H1 (cell line): ENCODE measurements at regions of chr6 and their contacts with region 1.

Region 1: DNA sequence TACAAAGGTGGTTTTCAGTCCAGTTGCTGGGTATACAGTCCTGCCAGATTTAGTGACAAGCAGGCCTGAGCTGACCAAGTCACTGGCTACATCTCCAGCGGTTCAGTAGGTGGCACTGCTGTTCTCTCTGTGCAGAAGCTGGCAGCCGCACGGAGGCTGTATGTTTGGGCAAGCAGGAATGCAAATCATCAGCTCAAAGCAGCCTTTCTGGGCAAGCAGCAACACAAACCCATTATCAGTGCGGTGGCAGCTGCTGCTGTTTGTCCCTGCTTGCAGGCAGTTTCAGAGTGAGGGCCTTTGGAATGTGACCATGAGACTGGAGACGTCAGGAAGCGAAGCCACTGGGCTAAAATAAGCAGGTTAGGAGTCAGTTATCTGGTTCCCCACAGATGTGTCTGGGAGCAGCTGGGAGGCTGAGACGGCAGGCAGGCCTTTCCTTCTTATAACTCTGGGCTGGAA is 72.5 kb downstream of the TXLNB start:
- DNase-seq: peak; percentile 65 to 71
- H3K4me3 ChIP-seq: no peak overlapping the region
- H3K27ac ChIP-seq: no peak overlapping the region
- H3K4me1 ChIP-seq: no peaks in the 10 kb centered on the region
- H3K27me3 ChIP-seq: no peaks in the 10 kb centered on the region
- CTCF ChIP-seq: peak; percentile 86 to 93 (median 92)
- EP300 ChIP-seq: no peak
- POLR2A ChIP-seq: no peak
- RAD21 ChIP-seq: peak; percentile 98

Region 2: DNA sequence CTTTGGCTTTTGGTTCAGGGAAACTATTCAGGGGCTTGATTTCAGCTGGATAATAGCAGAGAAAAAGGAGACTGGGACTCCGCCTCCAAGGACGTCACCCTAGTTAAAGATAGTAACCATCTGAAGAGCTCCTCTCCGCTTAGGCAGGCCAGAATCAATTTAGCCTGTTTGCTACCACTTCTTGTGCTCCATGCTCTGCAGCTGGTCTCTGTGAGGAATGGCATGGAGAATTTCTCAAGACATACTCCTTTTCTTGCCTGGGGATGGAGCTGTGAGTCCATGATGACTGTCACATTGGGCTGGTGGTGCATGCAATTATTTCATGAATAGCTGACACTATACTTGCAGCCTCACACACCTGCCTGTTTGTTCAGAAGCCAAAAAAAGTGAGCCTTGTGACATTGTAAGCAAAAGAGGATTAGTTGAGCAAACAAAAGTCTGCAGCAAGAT is 11.1 kb after region 1 on chr6:
- CTCF ChIA-PET with region 1: interaction called, 10 read pairs
- POLR2A ChIA-PET with region 1: no interaction called
- DNase-seq: no peak
- H3K4me3 ChIP-seq: no peak overlapping the region
- H3K27ac ChIP-seq: no peak overlapping the region
- H3K4me1 ChIP-seq: peaks cover 0 to 7% (median 0%) of the 10 kb centered on the region in 4 experiments; a peak in 2 of 7 replicates
- H3K27me3 ChIP-seq: no peaks in the 10 kb centered on the region
- CTCF ChIP-seq: peak; percentile 9 to 41 (median 21); a peak in 3 of 4 replicates
- EP300 ChIP-seq: no peak
- POLR2A ChIP-seq: no peak
- RAD21 ChIP-seq: peak; percentile 63 to 75

Region 3: DNA sequence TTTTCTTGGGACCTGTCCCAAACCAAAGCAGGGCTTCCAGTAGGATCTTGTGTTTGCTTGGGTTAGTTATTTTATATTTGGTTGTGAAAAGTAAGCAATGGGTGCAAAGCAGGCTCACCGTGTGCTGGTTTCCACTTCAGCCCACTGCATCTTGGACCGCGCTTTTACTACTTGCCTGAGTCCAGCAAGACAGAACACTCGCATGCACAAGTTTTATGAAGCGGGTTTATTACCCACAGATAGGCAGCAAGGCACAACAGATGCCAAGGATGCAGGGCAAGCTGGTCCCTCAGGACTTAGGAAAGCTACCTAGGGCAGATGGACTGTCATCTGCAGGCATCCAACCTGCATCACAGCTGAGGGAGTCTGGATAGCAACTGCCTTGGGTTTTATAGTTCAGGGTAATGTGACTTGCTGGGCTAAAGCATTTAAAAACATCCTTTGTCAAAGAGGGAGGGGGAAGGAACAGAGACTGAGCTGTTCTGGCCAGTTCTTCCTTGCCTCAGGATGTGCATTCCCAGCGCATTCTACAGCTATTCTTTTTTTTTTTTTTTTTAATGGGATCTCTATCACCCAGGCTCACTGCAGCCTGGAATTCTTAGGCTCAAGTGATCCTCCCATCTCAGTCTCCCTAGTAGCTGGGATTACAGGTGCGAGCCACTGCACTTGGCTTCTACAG is 136.6 kb after region 1 on chr6:
- CTCF ChIA-PET with region 1: interaction called, 33 read pairs
- POLR2A ChIA-PET with region 1: no interaction called
- DNase-seq: no peak
- H3K4me3 ChIP-seq: no peak overlapping the region
- H3K27ac ChIP-seq: no peak overlapping the region
- H3K4me1 ChIP-seq: no peaks in the 10 kb centered on the region
- H3K27me3 ChIP-seq: no peaks in the 10 kb centered on the region
- CTCF ChIP-seq: no peak
- EP300 ChIP-seq: no peak
- POLR2A ChIP-seq: no peak
- RAD21 ChIP-seq: no peak

Region 4: DNA sequence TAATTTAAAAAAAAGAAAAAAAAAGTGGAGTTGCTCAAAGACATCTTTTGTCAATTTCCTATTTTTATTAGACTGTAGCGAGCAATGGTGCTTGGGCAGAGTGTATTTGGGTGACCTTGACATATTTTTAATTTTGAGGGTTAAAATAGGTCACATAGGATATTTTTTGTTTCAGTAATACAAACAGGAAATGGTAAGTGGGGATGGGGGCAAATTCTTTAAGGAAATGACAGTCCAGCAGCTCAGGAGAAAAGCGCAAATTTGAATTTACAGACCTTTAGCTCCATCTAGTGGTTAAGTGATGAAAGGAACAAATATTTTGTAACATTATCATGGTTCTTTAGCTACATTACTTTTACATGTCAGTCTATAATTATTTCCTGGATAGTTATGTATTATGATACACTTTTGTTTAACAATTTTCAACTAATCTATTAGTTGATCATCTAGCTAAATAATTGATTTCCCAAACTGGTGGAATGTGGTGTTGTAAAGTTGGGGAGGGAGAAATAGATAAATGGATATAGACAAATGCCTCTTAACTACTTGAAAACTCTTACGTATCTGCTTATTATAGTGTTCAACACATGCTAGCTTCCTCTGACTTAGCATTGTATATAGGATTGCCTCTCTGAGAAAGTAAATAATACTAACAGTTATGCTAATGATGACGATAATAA is 145.1 kb after region 1 on chr6:
- CTCF ChIA-PET with region 1: interaction called, 68 read pairs
- POLR2A ChIA-PET with region 1: interaction called, 4 read pairs
- DNase-seq: no peak
- H3K4me3 ChIP-seq: no peak overlapping the region
- H3K27ac ChIP-seq: no peak overlapping the region
- H3K4me1 ChIP-seq: peaks cover 0 to 21% (median 15%) of the 10 kb centered on the region in 4 experiments; a peak in 5 of 7 replicates
- H3K27me3 ChIP-seq: no peaks in the 10 kb centered on the region
- CTCF ChIP-seq: peak in 2 of 3 experiments; percentile 48 to 54; a peak in 2 of 4 replicates
- EP300 ChIP-seq: no peak
- POLR2A ChIP-seq: no peak
- RAD21 ChIP-seq: peak; percentile 91 to 92